Right cardiac atrium (tissue), 5 donors: ENCODE measurements at regions of chr11 and their contacts with region 1.

Region 1: GRCh38 chr11:73393479-73394380 is 17.5 kb downstream of the RELT start:
- DNase-seq: peak; percentile 76 to 90 (median 88)
- ATAC-seq: peak; percentile 52 to 62
- H3K4me3 ChIP-seq: no peak overlapping the region
- H3K27ac ChIP-seq: no peak overlapping the region
- H3K4me1 ChIP-seq: no peaks in the 10 kb centered on the region
- H3K27me3 ChIP-seq: no peaks in the 10 kb centered on the region

Region 2: GRCh38 chr11:73295231-73295995 is 98.3 kb before region 1 on chr11:
- intact Hi-C with region 1: loop called in 2 of 4 experiments (anchors 5 kb)
- DNase-seq: peak; percentile 64 to 83 (median 81)
- ATAC-seq: peak in 1 of 2 donors; percentile 19
- H3K4me3 ChIP-seq: no peak overlapping the region
- H3K27ac ChIP-seq: no peak overlapping the region
- H3K4me1 ChIP-seq: no peaks in the 10 kb centered on the region
- H3K27me3 ChIP-seq: no peaks in the 10 kb centered on the region

Region 3: GRCh38 chr11:73350908-73351636 is 42.7 kb before region 1 on chr11:
- intact Hi-C with region 1: loop called in 2 of 4 experiments (anchors 5 kb)
- DNase-seq: peak in 1 of 3 donors; percentile 51
- ATAC-seq: peak; percentile 21 to 52
- H3K4me3 ChIP-seq: no peak overlapping the region
- H3K27ac ChIP-seq: no peak overlapping the region
- H3K4me1 ChIP-seq: no peaks in the 10 kb centered on the region
- H3K27me3 ChIP-seq: no peaks in the 10 kb centered on the region